Activated CD4-positive, alpha-beta T cell treated with anti-CD3 and anti-CD28 coated beads, Interleukin-2, amount 10 ng/mL, durations not matched to agents 7 days and 5 days (primary cell): ENCODE measurements at regions of chr1 and their contacts with region 1.

Region 1: DNA sequence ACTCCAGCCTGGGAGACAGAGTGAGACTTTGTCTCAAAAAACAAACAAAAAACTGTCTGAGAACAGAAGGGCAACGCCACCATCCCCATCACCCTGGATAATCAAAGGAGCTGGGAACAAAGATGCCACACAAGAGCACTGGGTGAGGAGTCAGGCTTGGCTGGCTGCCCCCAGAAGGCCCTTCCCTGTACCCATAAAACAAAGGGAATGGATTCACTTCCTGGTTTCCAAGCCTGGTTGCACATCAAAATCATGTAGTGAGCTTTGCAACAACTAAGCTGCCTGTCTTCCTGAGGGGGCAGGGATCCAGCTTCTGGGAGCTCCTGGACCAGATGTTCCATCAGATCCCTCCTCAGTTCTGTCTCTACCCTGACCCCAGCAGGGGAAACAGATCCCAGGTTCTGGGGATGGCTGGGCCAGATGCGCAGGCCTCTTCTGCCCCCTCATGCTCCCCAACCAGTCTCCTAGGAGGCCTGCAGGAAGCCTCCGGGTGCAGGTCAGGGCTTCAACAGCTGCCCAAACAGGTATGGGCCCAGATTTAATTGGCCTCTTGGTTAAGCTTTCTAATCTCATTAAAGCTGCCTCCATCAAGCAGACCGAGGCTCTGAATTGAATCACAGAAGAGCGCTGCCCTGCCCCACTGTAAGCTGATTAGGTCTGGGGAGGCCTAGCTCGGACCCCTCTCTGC is 97.8 kb downstream of the MRPL37 start:
- DNase-seq: no peak
- H3K4me3 Mint-ChIP-seq: no peak overlapping the region
- H3K27ac Mint-ChIP-seq: peak overlapping the region; percentile 56
- H3K4me1 Mint-ChIP-seq: peaks cover 58% of the 10 kb centered on the region
- H3K27me3 Mint-ChIP-seq: no peaks in the 10 kb centered on the region

Region 2: DNA sequence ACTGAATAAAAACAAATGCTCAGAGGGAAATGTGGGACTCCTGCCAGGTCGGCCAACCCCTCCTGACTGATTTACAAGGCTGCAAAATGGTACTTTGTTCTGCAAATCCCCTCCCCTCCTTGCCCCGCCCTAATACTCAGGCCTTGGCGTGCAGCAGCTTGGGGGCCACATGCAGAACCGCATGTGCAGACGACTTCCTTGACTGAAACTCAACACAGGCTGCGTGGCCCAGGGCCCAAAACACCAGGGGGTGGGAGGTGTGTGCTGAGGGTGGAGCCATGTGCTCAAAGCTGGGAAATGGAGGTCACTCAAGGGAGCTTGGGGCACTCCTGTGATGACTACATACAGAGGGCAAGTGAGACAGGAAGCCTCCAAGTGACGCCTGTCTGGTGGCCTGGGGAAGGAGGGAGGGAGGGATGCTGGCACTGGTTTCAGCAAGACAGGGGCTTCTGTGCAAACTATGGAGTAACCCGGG is 10.5 kb before region 1 on chr1:
- CTCF ChIA-PET with region 1: interaction called, 11 read pairs
- POLR2A ChIA-PET with region 1: no interaction called
- DNase-seq: peak; percentile 85
- H3K4me3 Mint-ChIP-seq: peak overlapping the region; percentile 75
- H3K27ac Mint-ChIP-seq: peak overlapping the region; percentile 90
- H3K4me1 Mint-ChIP-seq: peaks cover 91% of the 10 kb centered on the region
- H3K27me3 Mint-ChIP-seq: no peaks in the 10 kb centered on the region